Activated CD4-positive, alpha-beta memory T cell treated with anti-CD3 and anti-CD28 coated beads for 36 hours (primary cell): ENCODE measurements at regions of chr6 and their contacts with region 1.

Region 1: GRCh38 chr6:106512048-106512967 is 117.0 kb downstream of the RTN4IP1 start:
- DNase-seq: peak; percentile 87
- H3K4me3 Mint-ChIP-seq: peak overlapping the region; percentile 83
- H3K27ac Mint-ChIP-seq: peak overlapping the region; percentile 87
- H3K4me1 Mint-ChIP-seq: peaks cover 41% of the 10 kb centered on the region
- H3K27me3 Mint-ChIP-seq: no peaks in the 10 kb centered on the region

Region 2: GRCh38 chr6:106325336-106326178 is 186.8 kb before region 1 on chr6 and contains the start of gene ATG5:
- CTCF ChIA-PET with region 1: no interaction called
- POLR2A ChIA-PET with region 1: no interaction called
- intact Hi-C with region 1: loop called (anchors 2 kb)
- DNase-seq: peak; percentile 100
- H3K4me3 Mint-ChIP-seq: peak within 1 kb of the TSS; percentile 96
- H3K27ac Mint-ChIP-seq: peak within 1 kb of the TSS; percentile 94
- H3K4me1 Mint-ChIP-seq: peaks cover 38% of the 10 kb centered on the region
- H3K27me3 Mint-ChIP-seq: peaks cover 3% of the 10 kb centered on the region
- total RNA-seq, gene ATG5: 29.2 TPM

Region 3: DNA sequence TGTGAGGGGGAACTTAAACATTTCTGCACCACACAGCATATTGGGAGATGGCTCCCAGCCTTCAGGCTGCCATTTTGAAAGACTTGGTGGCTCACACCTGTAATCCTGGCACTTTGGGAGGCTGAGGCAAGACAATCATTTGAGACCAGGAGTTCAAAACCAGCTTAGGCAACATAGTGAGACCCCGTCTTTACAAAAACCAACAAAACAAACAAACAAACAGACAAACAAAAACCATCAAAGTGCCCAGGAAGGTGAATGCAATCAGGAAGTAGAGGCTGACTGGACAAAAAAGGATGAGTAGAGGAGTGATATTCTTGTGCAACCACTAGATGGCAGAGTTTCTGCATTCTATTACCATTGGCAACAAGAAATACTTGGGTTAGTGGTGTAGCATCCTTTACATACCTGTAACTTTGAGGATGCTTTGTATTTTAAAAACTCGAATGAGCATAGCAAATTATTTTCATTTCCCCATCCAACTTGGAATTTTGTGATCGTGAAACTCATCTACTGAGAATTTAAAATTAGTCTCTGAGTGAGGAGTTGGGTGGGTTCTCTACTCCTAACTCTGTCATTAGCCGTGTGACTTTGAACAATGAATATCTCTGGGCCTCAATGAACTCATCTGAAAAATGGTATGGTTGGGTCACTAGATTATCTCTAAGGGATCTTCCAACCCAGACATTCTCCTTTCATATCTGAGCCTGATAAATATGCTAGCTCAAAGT is 67.4 kb before region 1 on chr6:
- CTCF ChIA-PET with region 1: interaction called, 9 read pairs
- POLR2A ChIA-PET with region 1: no interaction called
- intact Hi-C with region 1: loop called (anchors 2 kb)
- DNase-seq: no peak
- H3K4me3 Mint-ChIP-seq: no peak overlapping the region
- H3K27ac Mint-ChIP-seq: no peak overlapping the region
- H3K4me1 Mint-ChIP-seq: peaks cover 17% of the 10 kb centered on the region
- H3K27me3 Mint-ChIP-seq: peaks cover 25% of the 10 kb centered on the region

Region 4: DNA sequence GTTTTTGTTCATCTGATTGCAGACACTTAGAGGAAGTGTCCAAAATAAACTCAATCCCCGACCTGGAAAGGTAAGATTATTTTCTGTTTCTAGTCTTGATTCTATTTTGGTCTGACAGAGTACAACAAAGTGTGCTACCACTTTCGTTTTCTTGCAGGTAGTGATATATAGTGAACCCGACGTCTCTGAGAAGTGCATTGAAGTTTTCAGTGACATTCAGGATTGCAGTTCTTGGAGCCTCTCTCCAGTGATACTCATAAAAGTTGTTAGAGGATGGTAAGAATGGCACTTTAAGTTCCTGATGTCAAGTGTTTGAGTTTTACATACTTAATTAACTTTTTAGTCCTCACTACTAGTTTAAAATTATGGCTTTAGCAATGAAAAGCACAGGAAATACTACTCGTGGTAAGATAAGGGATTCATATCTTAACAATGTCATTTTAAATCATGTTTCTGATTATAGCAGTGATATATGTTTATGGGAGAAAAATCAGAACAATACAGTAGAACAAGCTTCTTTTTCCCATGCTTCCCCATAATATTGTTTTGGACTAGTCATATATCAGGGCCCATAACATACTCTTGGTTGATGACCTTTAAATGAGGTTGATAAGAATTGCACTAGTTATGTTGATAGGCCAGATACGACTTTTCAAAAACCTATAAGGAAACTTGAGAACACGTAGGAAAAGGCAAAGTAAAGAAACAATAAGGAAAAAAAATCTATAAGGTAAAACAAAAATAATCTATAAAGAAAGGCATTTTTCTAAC is 13.0 kb after region 1 on chr6:
- CTCF ChIA-PET with region 1: interaction called, 35 read pairs
- POLR2A ChIA-PET with region 1: interaction called, 75 read pairs
- intact Hi-C with region 1: loop called (anchors 1 kb)
- DNase-seq: no peak
- H3K4me3 Mint-ChIP-seq: peak overlapping the region; percentile 82
- H3K27ac Mint-ChIP-seq: peak overlapping the region; percentile 94
- H3K4me1 Mint-ChIP-seq: peaks cover 74% of the 10 kb centered on the region
- H3K27me3 Mint-ChIP-seq: no peaks in the 10 kb centered on the region

Region 5: DNA sequence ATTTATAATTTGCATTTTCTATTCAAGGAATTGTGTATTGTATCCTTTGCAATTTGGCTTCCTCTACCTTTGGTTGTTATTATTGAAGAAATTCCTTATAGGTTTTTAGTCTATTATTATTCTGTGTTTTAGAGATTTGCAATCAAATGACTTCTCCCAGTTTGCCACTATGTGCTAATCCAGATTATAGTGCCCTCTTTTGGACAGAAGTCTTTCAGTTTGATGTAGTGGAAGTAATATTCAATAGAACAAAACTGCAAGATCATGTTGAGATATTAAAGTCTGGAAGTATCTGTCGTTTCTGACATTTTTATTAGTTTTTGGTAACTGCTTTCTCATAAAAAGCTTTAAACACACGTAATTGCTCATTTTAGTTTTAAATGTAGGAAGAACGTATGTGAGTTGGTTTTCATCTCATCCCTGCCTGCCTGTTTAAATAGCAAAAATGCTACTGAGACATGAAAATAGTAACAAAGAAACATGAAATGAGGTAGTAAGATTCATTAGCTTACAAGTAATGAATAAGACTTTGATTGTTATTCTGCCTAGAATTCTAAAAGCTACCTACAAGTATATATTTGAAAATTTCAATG is 44.2 kb after region 1 on chr6:
- CTCF ChIA-PET with region 1: interaction called, 94 read pairs
- POLR2A ChIA-PET with region 1: interaction called, 4 read pairs
- intact Hi-C with region 1: loop called (anchors 1 kb)
- DNase-seq: no peak
- H3K4me3 Mint-ChIP-seq: no peak overlapping the region
- H3K27ac Mint-ChIP-seq: no peak overlapping the region
- H3K4me1 Mint-ChIP-seq: peaks cover 30% of the 10 kb centered on the region
- H3K27me3 Mint-ChIP-seq: no peaks in the 10 kb centered on the region

Region 6: DNA sequence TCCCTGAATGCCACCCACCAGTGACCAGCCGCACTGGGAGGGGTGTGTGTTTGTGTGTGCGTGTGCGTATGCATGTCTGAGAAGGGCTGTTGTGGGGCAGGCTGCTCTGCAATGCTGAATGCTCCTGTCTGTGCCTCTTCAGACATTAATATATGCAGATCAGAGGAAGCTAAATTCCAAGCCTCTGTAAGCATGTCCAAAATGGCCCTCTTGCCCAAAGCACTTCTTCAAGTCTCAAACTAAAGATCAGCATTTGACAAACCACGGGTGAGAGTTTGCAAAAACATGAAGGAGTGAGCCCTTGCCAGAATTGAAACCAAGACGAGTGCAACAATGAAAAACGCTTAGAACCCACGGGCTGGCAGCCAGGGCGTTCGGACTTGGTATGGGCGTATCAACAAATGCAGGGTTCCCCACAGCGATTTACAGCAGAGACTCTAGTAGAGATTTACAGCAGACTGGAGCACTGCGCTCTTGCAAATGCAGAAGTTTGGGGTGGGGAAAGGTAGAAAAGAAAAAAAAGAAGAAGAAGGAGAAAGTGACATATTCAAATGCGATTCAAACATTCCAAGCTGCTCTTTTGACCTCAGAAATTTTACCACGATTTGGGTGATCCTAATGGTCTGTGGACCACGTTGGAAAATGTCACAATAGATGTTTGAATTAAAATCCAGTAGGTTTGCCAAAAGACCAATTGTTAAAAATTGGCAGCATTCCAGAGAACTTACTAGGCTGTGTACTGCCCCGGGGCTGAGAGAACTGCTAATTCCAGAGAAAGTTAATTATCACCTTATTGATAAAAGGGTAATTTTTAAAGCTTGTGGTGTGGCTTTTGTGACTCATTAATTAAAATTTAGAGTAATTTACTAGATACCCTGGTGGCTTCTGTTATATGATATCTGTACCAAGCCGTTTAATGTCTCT is 1308.3 kb after region 1 on chr6:
- CTCF ChIA-PET with region 1: no interaction called
- POLR2A ChIA-PET with region 1: no interaction called
- intact Hi-C with region 1: loop called (anchors 5 kb)
- DNase-seq: peak; percentile 45
- H3K4me3 Mint-ChIP-seq: peak overlapping the region; percentile 86
- H3K27ac Mint-ChIP-seq: peak overlapping the region; percentile 80
- H3K4me1 Mint-ChIP-seq: peaks cover 83% of the 10 kb centered on the region
- H3K27me3 Mint-ChIP-seq: no peaks in the 10 kb centered on the region